WTC11 (cell line): ENCODE measurements at regions of chr17 and their contacts with region 1.

Region 1: DNA sequence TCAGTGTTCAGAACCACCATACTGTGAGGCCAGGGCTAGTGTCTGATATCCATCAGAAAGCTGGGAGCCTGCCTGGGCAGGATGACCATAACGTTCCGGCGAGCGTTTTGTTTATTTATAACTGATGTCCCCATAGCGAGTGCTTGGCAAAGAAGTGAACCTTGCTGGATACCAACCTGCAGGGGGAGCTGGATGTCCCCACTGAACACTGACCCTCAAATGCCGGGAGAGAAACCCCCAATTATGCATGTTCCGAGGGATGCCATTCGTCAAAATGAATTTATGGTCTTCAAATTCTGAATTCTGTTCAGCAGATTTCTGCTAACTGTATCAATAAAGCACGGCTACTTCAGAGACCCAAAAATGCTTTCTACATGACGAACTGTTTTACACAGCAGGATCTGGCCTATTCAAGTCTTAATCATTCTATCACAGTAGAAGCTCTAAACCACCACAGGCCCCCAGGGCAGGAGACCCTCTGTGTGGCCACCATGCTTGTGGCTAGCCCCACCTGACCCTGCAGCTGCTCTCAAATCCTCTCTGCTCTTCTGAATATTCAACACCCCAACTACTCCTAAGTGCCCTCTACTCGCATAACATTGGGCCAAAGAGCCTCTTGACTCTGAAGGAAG is 15.2 kb downstream of the MED24 start:
- DNase-seq: peak; percentile 59
- ATAC-seq: peak; percentile 65
- H3K4me3 Mint-ChIP-seq: 0 out of 2 replicates have a peak overlapping the region, but pooled peaks have one; percentile 6
- H3K27ac Mint-ChIP-seq: peak overlapping the region; percentile 62
- H3K4me1 Mint-ChIP-seq: peaks cover 18% of the 10 kb centered on the region
- H3K27me3 Mint-ChIP-seq: no peaks in the 10 kb centered on the region
- CTCF ChIP-seq: 0 out of 2 replicates have a peak, but pooled peaks have one; percentile 11

Region 2: DNA sequence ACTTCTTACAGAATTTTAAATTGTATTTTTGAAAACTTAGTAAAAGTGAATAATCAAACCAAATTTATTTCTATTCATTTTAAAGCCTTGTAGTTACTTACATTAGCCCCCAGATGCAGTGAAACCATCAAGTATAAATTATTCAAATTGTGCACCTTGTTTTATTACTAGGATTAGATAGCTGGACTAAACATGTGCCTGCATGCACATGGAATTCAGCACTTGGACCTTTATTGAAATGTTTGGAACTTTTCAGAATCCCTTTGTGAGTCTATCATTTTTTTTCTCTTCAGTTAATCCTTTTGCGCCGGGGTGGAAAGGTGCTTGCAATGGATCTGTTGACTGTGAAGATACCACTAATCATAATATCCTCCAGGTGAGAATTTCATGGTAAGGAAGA is 166.2 kb before region 1 on chr17:
- CTCF ChIA-PET with region 1: no interaction called
- POLR2A ChIA-PET with region 1: no interaction called
- DNase-seq: no peak
- ATAC-seq: no peak
- H3K4me3 Mint-ChIP-seq: no peak overlapping the region
- H3K27ac Mint-ChIP-seq: no peak overlapping the region
- H3K4me1 Mint-ChIP-seq: no peaks in the 10 kb centered on the region
- H3K27me3 Mint-ChIP-seq: peaks cover 17% of the 10 kb centered on the region
- CTCF ChIP-seq: no peak

Region 3: GRCh38 chr17:39939588-39940419 is 99.2 kb before region 1 on chr17:
- CTCF ChIA-PET with region 1: no interaction called
- POLR2A ChIA-PET with region 1: no interaction called
- DNase-seq: no peak
- ATAC-seq: peak; percentile 68
- H3K4me3 Mint-ChIP-seq: no peak overlapping the region
- H3K27ac Mint-ChIP-seq: no peak overlapping the region
- H3K4me1 Mint-ChIP-seq: peaks cover 7% of the 10 kb centered on the region; the same call in 1 of the 2 replicates
- H3K27me3 Mint-ChIP-seq: no peaks in the 10 kb centered on the region; the same call in 1 of the 2 replicates
- CTCF ChIP-seq: no peak

Region 4: DNA sequence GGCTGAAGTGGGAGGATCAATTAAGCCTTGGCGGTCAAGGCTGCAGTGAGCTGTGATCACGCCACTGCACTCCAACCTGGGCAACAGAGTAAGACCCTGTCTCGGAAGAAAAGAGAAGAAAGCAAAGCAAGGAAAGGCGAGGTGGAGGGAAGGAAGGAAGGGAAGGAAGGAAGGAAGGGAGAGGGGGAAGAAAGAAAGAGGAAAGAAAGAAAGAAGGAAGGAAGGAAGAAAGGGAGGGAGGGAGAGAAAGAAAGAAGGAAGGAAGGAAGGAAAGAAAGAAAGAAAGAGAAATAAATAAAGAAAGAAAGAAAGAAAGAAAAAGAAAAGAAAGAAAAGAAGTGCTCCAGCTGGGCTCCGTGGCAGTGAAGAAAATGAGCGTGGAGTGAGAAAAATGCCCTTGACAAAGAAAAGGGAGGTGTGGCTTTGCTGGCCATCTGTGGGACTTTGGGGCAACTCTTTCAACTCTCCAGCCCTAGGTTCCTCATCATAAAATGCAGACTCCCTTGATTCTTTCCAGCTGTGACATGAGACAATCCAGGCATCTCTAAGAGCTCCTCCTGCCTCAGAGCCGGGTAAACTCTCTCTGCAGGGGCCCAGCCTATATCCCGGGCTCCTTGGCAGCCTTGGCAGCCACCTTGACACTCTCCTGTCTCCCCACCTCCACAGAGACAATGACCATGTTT is 73.8 kb before region 1 on chr17:
- CTCF ChIA-PET with region 1: no interaction called
- POLR2A ChIA-PET with region 1: no interaction called
- DNase-seq: no peak
- ATAC-seq: no peak
- H3K4me3 Mint-ChIP-seq: no peak overlapping the region
- H3K27ac Mint-ChIP-seq: no peak overlapping the region
- H3K4me1 Mint-ChIP-seq: peaks cover 4% of the 10 kb centered on the region; the same call in 1 of the 2 replicates
- H3K27me3 Mint-ChIP-seq: peaks cover 7% of the 10 kb centered on the region; the same call in 1 of the 2 replicates
- CTCF ChIP-seq: no peak

Region 5: DNA sequence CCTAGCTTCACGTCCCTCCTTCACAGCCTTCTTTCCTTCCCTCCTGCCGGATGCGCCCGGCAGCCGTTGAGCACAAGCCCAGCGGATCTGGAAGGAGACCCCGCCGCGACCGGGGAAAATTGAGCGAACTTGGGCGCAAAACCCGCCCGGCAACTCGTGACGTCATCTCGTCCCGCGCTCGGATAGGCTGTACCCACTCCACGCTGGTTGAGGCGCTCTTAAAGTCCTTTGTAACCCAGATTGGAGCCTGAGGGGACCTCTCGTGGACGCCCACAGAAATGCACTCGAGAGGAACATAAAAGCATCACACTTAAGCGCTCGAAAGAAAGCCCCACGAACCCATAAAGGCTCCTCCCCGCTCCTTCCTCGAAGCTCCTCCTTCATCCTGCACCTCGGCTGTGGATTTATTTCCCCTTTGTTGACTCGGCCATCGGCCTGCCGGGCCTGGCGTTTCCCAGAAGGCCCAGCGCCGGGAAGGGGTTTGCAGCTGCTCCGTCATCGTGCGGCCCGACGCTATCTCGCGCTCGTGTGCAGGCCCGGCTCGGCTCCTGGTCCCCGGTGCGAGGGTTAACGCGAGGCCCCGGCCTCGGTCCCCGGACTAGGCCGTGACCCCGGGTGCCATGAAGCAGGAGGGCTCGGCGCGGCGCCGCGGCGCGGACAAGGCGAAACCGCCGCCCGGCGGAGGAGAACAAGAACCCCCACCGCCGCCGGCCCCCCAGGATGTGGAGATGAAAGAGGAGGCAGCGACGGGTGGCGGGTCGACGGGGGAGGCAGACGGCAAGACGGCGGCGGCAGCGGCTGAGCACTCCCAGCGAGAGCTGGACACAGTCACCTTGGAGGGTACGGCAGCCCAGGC is 58.4 kb before region 1 on chr17 and contains the start of gene PSMD3:
- CTCF ChIA-PET with region 1: interaction called, 13 read pairs
- POLR2A ChIA-PET with region 1: no interaction called
- DNase-seq: peak; percentile 98
- ATAC-seq: peak; percentile 94
- H3K4me3 Mint-ChIP-seq: peak within 1 kb of the TSS; percentile 89
- H3K27ac Mint-ChIP-seq: peak within 1 kb of the TSS; percentile 97
- H3K4me1 Mint-ChIP-seq: peaks cover 25% of the 10 kb centered on the region
- H3K27me3 Mint-ChIP-seq: no peaks in the 10 kb centered on the region
- CTCF ChIP-seq: peak; percentile 52
- total RNA-seq, gene PSMD3: 157 to 190 TPM (median 158 TPM) in 3 replicates

Region 6: GRCh38 chr17:40026816-40027613 is 12.0 kb before region 1 on chr17:
- CTCF ChIA-PET with region 1: interaction called, 23 read pairs
- POLR2A ChIA-PET with region 1: interaction called, 4 read pairs
- DNase-seq: peak; percentile 93
- ATAC-seq: peak; percentile 99
- H3K4me3 Mint-ChIP-seq: no peak overlapping the region
- H3K27ac Mint-ChIP-seq: no peak overlapping the region
- H3K4me1 Mint-ChIP-seq: no peaks in the 10 kb centered on the region
- H3K27me3 Mint-ChIP-seq: no peaks in the 10 kb centered on the region
- CTCF ChIP-seq: peak; percentile 95

Region 7: GRCh38 chr17:40062329-40063186 is 23.6 kb after region 1 on chr17 and contains the start of gene THRA:
- CTCF ChIA-PET with region 1: interaction called, 58 read pairs
- POLR2A ChIA-PET with region 1: no interaction called
- DNase-seq: peak; percentile 53
- ATAC-seq: peak; percentile 64
- H3K4me3 Mint-ChIP-seq: peak within 1 kb of the TSS; percentile 86
- H3K27ac Mint-ChIP-seq: no peak within 1 kb of the TSS
- H3K4me1 Mint-ChIP-seq: peaks cover 62% of the 10 kb centered on the region
- H3K27me3 Mint-ChIP-seq: peaks cover 32% of the 10 kb centered on the region
- CTCF ChIP-seq: no peak
- total RNA-seq, gene THRA: 11.9 to 15.9 TPM (median 12.0 TPM) in 3 replicates

Region 8: GRCh38 chr17:40086150-40087044 is 47.4 kb after region 1 on chr17:
- CTCF ChIA-PET with region 1: interaction called, 161 read pairs
- POLR2A ChIA-PET with region 1: no interaction called
- DNase-seq: peak; percentile 88
- ATAC-seq: peak; percentile 85
- H3K4me3 Mint-ChIP-seq: no peak overlapping the region
- H3K27ac Mint-ChIP-seq: no peak overlapping the region
- H3K4me1 Mint-ChIP-seq: peaks cover 16% of the 10 kb centered on the region
- H3K27me3 Mint-ChIP-seq: no peaks in the 10 kb centered on the region
- CTCF ChIP-seq: peak; percentile 84

Region 9: GRCh38 chr17:40098846-40099618 is 60.0 kb after region 1 on chr17:
- CTCF ChIA-PET with region 1: interaction called, 27 read pairs
- POLR2A ChIA-PET with region 1: no interaction called
- DNase-seq: peak; percentile 99
- ATAC-seq: peak; percentile 79
- H3K4me3 Mint-ChIP-seq: peak overlapping the region; percentile 79
- H3K27ac Mint-ChIP-seq: peak overlapping the region; percentile 44
- H3K4me1 Mint-ChIP-seq: peaks cover 51% of the 10 kb centered on the region
- H3K27me3 Mint-ChIP-seq: peaks cover 47% of the 10 kb centered on the region
- CTCF ChIP-seq: no peak